Activated T-helper 2 cell treated with anti-CD3 and anti-CD28 coated beads, Interferon-gamma antibody, Interleukin-2, Interleukin-4, amounts not matched to agents 10 μg/mL and 5 μg/mL and 100 μg/mL, durations not matched to agents 14 hours and 24 hours and 36 hours (primary cell): ENCODE measurements at regions of chr7 and their contacts with region 1.

Region 1: GRCh38 chr7:138002096-138002827 is 376 bp upstream of the CREB3L2 start:
- DNase-seq: peak; percentile 98
- H3K4me3 Mint-ChIP-seq: peak overlapping the region; percentile 96
- H3K27ac Mint-ChIP-seq: peak overlapping the region; percentile 93
- H3K4me1 Mint-ChIP-seq: peaks cover 36% of the 10 kb centered on the region
- H3K27me3 Mint-ChIP-seq: no peaks in the 10 kb centered on the region

Region 2: GRCh38 chr7:137923380-137923779 is 78.9 kb before region 1 on chr7:
- intact Hi-C with region 1: loop called (anchors 1 kb)
- DNase-seq: no peak
- H3K4me3 Mint-ChIP-seq: no peak overlapping the region
- H3K27ac Mint-ChIP-seq: peak overlapping the region; percentile 10
- H3K4me1 Mint-ChIP-seq: peaks cover 33% of the 10 kb centered on the region
- H3K27me3 Mint-ChIP-seq: no peaks in the 10 kb centered on the region

Region 3: GRCh38 chr7:137934941-137935883 is 67.0 kb before region 1 on chr7:
- intact Hi-C with region 1: loop called (anchors 1 kb)
- DNase-seq: no peak
- H3K4me3 Mint-ChIP-seq: peak overlapping the region; percentile 78
- H3K27ac Mint-ChIP-seq: peak overlapping the region; percentile 79
- H3K4me1 Mint-ChIP-seq: peaks cover 39% of the 10 kb centered on the region
- H3K27me3 Mint-ChIP-seq: no peaks in the 10 kb centered on the region

Region 4: GRCh38 chr7:137961200-137962177 is 40.8 kb before region 1 on chr7:
- intact Hi-C with region 1: loop called (anchors 2 kb)
- DNase-seq: no peak
- H3K4me3 Mint-ChIP-seq: no peak overlapping the region
- H3K27ac Mint-ChIP-seq: peak overlapping the region; percentile 38
- H3K4me1 Mint-ChIP-seq: peaks cover 28% of the 10 kb centered on the region
- H3K27me3 Mint-ChIP-seq: no peaks in the 10 kb centered on the region

Region 5: GRCh38 chr7:138459413-138460175 is 457.3 kb after region 1 on chr7:
- intact Hi-C with region 1: loop called (anchors 1 kb)
- DNase-seq: peak; percentile 97
- H3K4me3 Mint-ChIP-seq: peak overlapping the region; percentile 74
- H3K27ac Mint-ChIP-seq: peak overlapping the region; percentile 21
- H3K4me1 Mint-ChIP-seq: peaks cover 24% of the 10 kb centered on the region
- H3K27me3 Mint-ChIP-seq: peaks cover 3% of the 10 kb centered on the region

Region 6: DNA sequence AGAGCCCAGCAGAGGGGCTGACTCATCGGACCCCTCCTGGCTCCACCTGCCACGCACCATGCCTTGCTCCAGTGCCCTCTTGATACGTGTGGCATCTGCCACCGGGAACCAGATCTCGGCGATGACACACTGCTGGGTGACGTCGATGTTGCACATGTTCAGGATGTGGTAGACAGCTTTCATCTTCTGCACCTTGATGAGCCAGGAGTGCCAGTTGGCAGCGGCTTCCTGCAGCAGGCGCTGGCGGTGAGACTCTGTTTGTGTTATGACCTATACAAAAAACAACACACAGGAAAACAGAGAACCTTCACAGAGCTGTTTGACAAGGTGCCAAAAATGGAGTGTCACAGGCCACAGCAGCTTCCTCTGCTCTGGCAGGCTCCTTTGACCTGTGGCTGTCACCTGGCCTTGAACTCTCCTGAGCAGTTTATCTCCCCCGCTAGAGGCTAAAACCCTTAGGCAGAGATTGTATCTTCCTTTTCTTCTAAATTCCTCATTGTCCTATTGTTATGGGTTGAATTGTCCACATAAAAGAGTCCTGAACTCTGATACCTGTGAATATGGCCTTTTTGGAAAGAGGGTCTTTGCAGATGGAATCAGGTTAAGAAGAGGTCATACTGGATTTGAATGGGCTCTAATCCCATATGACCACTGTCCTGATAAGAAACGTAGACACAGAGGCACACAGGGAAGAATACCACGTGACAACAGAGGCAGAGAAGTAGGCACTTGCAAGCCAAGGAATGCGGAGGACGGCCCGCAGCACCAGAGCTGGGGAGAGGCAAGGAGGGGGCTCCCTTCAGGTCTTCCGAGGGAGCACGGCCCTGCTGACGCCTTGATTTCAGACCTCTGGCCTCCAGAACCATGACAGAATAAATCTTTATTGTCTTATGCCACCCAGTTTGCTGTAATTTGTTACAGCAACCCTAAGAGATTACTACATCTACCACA is 750.6 kb after region 1 on chr7:
- intact Hi-C with region 1: loop called (anchors 10 kb)
- DNase-seq: peak; percentile 86
- H3K4me3 Mint-ChIP-seq: no peak overlapping the region
- H3K27ac Mint-ChIP-seq: peak overlapping the region; percentile 50
- H3K4me1 Mint-ChIP-seq: peaks cover 35% of the 10 kb centered on the region
- H3K27me3 Mint-ChIP-seq: peaks cover 11% of the 10 kb centered on the region